IMR-90 (cell line): ENCODE measurements at regions of chr6 and their contacts with region 1.

Region 1: GRCh38 chr6:138336221-138336620 is 41.5 kb upstream of the SMIM28 start:
- DNase-seq: no peak
- ATAC-seq: no peak
- H3K4me3 ChIP-seq: no peak overlapping the region
- H3K27ac ChIP-seq: no peak overlapping the region
- H3K4me1 ChIP-seq: no peaks in the 10 kb centered on the region
- H3K27me3 ChIP-seq: peaks cover 10% of the 10 kb centered on the region
- CTCF ChIP-seq: no peak
- POLR2A ChIP-seq: no peak
- RAD21 ChIP-seq: no peak

Region 2: GRCh38 chr6:138240476-138241245 is 95.6 kb before region 1 on chr6:
- CTCF ChIA-PET with region 1: no interaction called
- POLR2A ChIA-PET with region 1: no interaction called
- dilution Hi-C with region 1: no loop called
- in situ Hi-C with region 1: no loop called
- intact Hi-C with region 1: loop called (anchors 5 kb)
- DNase-seq: no peak
- ATAC-seq: no peak
- H3K4me3 ChIP-seq: no peak overlapping the region
- H3K27ac ChIP-seq: no peak overlapping the region
- H3K4me1 ChIP-seq: no peaks in the 10 kb centered on the region
- H3K27me3 ChIP-seq: peaks cover 5% of the 10 kb centered on the region
- CTCF ChIP-seq: no peak
- POLR2A ChIP-seq: no peak
- RAD21 ChIP-seq: no peak

Region 3: DNA sequence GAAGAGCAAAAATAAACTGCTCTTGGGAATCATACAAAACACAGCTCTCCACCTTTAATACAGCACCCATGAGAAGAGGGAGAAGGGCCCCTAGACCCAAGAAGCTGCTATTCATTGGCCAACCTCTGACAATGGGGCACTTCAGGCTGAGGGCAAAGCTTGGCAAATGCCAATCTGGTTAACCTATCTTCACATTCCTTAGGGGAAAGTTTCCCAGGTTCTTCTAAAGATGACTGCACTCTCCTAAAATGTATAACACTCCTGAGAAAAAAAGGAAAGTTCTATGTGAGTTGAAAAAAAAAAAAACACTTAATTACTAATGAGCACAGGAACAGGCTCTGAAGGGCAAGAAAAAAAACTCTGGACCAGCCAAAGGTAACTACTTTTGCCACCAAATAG is 46.6 kb after region 1 on chr6:
- CTCF ChIA-PET with region 1: no interaction called
- POLR2A ChIA-PET with region 1: no interaction called
- dilution Hi-C with region 1: no loop called
- in situ Hi-C with region 1: no loop called
- intact Hi-C with region 1: loop called (anchors 5 kb)
- DNase-seq: no peak
- ATAC-seq: no peak
- H3K4me3 ChIP-seq: no peak overlapping the region
- H3K27ac ChIP-seq: no peak overlapping the region
- H3K4me1 ChIP-seq: no peaks in the 10 kb centered on the region
- H3K27me3 ChIP-seq: peaks cover under 1% of the 10 kb centered on the region; the same call in 1 of the 2 replicates
- CTCF ChIP-seq: no peak
- POLR2A ChIP-seq: no peak
- RAD21 ChIP-seq: no peak